Panc1 (cell line): ENCODE measurements at regions of chr3 and their contacts with region 1.

Region 1: GRCh38 chr3:149936812-149937233 is 33.9 kb downstream of the PFN2 start:
- DNase-seq: peak; percentile 73
- ATAC-seq: peak; percentile 92
- H3K4me3 ChIP-seq: peak overlapping the region in 1 of 2 experiments; percentile 26; a peak in 1 of 4 replicates
- H3K27ac ChIP-seq: no peak overlapping the region
- H3K4me1 ChIP-seq: peaks cover 5% of the 10 kb centered on the region; the same call in 1 of the 2 replicates
- H3K27me3 ChIP-seq: no peaks in the 10 kb centered on the region
- CTCF ChIP-seq: peak; percentile 91

Region 2: GRCh38 chr3:149783576-149783975 is 153.2 kb before region 1 on chr3:
- CTCF ChIA-PET with region 1: no interaction called
- POLR2A ChIA-PET with region 1: no interaction called
- in situ Hi-C with region 1: no loop called
- intact Hi-C with region 1: no loop called
- DNase-seq: no peak
- ATAC-seq: peak; percentile 64; the same call in 1 of the 2 replicates
- H3K4me3 ChIP-seq: no peak overlapping the region
- H3K27ac ChIP-seq: no peak overlapping the region
- H3K4me1 ChIP-seq: no peaks in the 10 kb centered on the region
- H3K27me3 ChIP-seq: no peaks in the 10 kb centered on the region
- CTCF ChIP-seq: no peak

Region 3: GRCh38 chr3:150220799-150221198 is 284.0 kb after region 1 on chr3:
- CTCF ChIA-PET with region 1: interaction called, 4 read pairs
- POLR2A ChIA-PET with region 1: interaction called, 3 read pairs
- in situ Hi-C with region 1: no loop called
- intact Hi-C with region 1: loop called (anchors 1 kb)
- DNase-seq: no peak
- ATAC-seq: no peak
- H3K4me3 ChIP-seq: peak overlapping the region; percentile 35 to 40
- H3K27ac ChIP-seq: peak overlapping the region; percentile 65
- H3K4me1 ChIP-seq: 0 out of 2 replicates have a peak, but pooled peaks cover 4% of the 10 kb centered on the region
- H3K27me3 ChIP-seq: no peaks in the 10 kb centered on the region
- CTCF ChIP-seq: no peak